H1 (cell line): ENCODE measurements at regions of chr4 and their contacts with region 1.

Region 1: DNA sequence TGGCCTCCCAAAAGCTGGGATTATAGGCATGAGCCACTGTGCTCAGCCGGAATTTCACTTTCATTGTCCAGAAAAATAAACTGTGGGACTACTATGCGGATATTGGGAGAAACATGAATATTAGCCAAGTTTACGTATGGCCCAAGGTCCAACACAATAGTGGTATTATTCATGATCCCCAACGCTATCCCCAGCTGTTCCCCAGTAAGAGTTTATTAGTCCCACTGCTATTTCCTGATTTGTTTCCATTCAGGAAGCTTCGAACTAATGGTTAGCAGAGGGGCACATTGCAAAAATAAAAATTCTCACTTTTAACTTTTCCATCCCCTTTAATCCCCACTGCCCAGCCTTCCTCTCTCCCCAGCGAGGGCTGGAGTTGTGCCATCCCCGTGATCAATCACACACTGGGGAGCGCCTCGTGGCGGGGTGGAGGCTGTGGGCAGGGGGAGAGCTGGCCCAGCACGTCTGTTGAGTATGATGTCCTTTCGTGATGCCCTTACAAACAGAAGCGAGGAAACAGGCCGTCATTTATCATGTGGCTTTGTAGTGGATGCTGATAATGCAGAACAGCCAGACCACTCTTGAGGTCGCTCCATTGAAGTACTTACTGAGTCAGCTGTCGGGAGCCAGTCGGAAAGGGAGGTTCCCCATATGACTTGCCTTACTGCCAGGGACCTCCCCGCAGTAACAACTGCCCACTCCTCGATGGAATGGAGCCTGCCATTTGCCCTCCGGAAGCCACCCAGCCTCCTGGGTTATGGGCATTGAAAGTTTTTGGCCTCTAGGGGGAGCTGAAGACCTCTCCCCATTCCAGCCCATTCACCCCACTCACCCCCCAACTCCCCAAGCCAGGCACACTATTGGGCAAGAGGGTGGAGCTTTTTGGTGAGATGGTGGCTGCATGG is 117.0 kb downstream of the KDR start:
- DNase-seq: peak in 1 of 2 experiments; percentile 69
- H3K4me3 ChIP-seq: no peak overlapping the region
- H3K27ac ChIP-seq: no peak overlapping the region
- H3K4me1 ChIP-seq: no peaks in the 10 kb centered on the region; a peak in 1 of 7 replicates
- H3K27me3 ChIP-seq: no peaks in the 10 kb centered on the region
- CTCF ChIP-seq: peak; percentile 54 to 73 (median 65)
- EP300 ChIP-seq: no peak
- POLR2A ChIP-seq: no peak
- RAD21 ChIP-seq: peak; percentile 76 to 81

Region 2: GRCh38 chr4:54986095-54986846 is 22.1 kb before region 1 on chr4:
- CTCF ChIA-PET with region 1: interaction called, 13 read pairs
- POLR2A ChIA-PET with region 1: no interaction called
- DNase-seq: peak in 1 of 2 experiments; percentile 56
- H3K4me3 ChIP-seq: peak overlapping the region in 1 of 4 experiments; percentile 2; a peak in 1 of 8 replicates
- H3K27ac ChIP-seq: peak overlapping the region; percentile 79
- H3K4me1 ChIP-seq: peaks cover 7 to 11% (median 9%) of the 10 kb centered on the region in 4 experiments
- H3K27me3 ChIP-seq: no peaks in the 10 kb centered on the region
- CTCF ChIP-seq: no peak
- EP300 ChIP-seq: no peak
- POLR2A ChIP-seq: peak; percentile 31 to 60; a peak in 2 of 3 replicates
- RAD21 ChIP-seq: no peak; a peak in 1 of 4 replicates

Region 3: DNA sequence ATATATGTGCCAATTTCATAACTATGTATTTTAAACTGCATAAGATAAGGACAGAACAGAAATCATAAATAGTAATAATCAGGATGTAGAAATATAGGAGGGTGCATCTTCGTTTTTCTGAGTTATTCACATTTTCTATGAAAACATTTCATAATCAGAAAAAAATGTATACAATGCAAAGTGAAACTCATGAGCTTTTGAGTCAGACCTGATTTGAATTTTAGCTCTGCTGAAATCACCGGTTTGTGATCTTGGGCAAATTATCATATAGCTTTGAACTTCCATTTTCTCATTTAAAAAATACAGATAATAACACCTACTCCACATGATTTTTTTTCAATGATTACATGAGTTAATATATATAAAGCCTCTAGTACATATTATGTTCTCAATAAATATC is 10.1 kb after region 1 on chr4:
- CTCF ChIA-PET with region 1: interaction called, 12 read pairs
- POLR2A ChIA-PET with region 1: no interaction called
- DNase-seq: no peak
- H3K4me3 ChIP-seq: no peak overlapping the region
- H3K27ac ChIP-seq: no peak overlapping the region
- H3K4me1 ChIP-seq: no peaks in the 10 kb centered on the region; a peak in 2 of 7 replicates
- H3K27me3 ChIP-seq: no peaks in the 10 kb centered on the region
- CTCF ChIP-seq: no peak
- EP300 ChIP-seq: no peak
- POLR2A ChIP-seq: no peak
- RAD21 ChIP-seq: no peak

Region 4: DNA sequence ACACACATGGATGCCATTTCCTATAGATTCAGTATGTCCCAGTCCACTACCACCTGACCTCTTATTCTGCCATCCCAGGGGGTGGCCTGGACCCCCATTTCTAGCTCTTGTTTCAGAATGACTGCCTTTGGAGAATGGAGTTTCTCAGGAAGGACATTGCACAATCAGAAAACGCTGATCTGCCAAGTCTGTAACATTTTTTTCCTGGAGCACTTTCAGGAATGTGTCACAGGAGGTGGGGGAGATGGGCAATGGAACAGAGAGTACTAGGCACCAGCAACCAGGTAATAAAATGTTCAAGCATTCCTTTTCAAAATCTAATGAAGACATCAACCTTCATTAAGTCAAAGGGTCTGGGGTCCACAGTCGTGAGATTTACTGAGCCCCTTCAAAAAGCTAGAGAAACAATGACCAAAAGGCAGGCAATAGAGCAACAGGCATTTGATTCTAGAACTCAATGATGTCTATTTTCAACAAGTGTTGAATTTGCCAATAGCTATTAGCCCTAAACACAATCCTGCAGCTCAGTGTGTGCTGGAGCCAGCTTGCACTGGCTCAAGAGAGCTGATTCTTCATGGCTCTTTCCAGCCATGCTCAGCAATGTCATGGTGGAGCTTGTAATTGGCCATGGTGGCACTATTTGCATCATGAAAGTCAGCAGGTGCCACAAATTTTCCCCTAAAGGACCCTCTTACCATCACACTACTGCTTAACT is 29.9 kb after region 1 on chr4:
- CTCF ChIA-PET with region 1: no interaction called
- POLR2A ChIA-PET with region 1: no interaction called
- DNase-seq: no peak
- H3K4me3 ChIP-seq: no peak overlapping the region
- H3K27ac ChIP-seq: no peak overlapping the region
- H3K4me1 ChIP-seq: no peaks in the 10 kb centered on the region
- H3K27me3 ChIP-seq: no peaks in the 10 kb centered on the region; a peak in 1 of 7 replicates
- CTCF ChIP-seq: no peak
- EP300 ChIP-seq: no peak
- POLR2A ChIP-seq: no peak
- RAD21 ChIP-seq: no peak

Region 5: GRCh38 chr4:55074386-55074785 is 66.0 kb after region 1 on chr4:
- CTCF ChIA-PET with region 1: interaction called, 11 read pairs
- POLR2A ChIA-PET with region 1: no interaction called
- DNase-seq: no peak
- H3K4me3 ChIP-seq: no peak overlapping the region
- H3K27ac ChIP-seq: no peak overlapping the region
- H3K4me1 ChIP-seq: peaks cover 0 to 2% (median 0%) of the 10 kb centered on the region in 4 experiments; a peak in 2 of 7 replicates
- H3K27me3 ChIP-seq: no peaks in the 10 kb centered on the region
- CTCF ChIP-seq: no peak
- EP300 ChIP-seq: no peak
- POLR2A ChIP-seq: no peak
- RAD21 ChIP-seq: no peak

Region 6: GRCh38 chr4:55116450-55116849 is 108.0 kb after region 1 on chr4:
- CTCF ChIA-PET with region 1: no interaction called
- POLR2A ChIA-PET with region 1: no interaction called
- DNase-seq: no peak
- H3K4me3 ChIP-seq: no peak overlapping the region
- H3K27ac ChIP-seq: no peak overlapping the region
- H3K4me1 ChIP-seq: peaks cover 0 to 6% (median 3%) of the 10 kb centered on the region in 4 experiments; a peak in 3 of 7 replicates
- H3K27me3 ChIP-seq: no peaks in the 10 kb centered on the region
- CTCF ChIP-seq: no peak
- EP300 ChIP-seq: no peak
- POLR2A ChIP-seq: no peak
- RAD21 ChIP-seq: no peak

Region 7: DNA sequence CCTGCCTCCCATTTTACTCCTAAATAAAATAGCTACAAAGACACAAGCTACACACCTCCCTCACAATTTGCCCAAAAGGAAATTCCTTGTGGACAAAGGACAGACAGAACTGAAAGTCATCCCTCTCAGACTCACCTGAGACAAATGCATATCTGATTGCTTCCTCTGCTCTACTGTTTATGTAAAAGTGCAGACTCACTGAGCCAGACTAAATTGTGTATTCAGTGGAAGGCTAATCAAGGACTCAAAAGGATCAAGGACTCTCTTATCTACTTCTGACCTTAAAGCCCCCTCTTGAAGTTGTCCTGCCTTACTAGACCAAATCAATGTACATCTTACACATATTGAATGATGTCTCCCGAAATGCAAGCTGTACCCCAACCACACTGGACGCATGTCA is 579.7 kb after region 1 on chr4:
- CTCF ChIA-PET with region 1: no interaction called
- POLR2A ChIA-PET with region 1: no interaction called
- DNase-seq: no peak
- H3K4me3 ChIP-seq: no peak overlapping the region
- H3K27ac ChIP-seq: no peak overlapping the region
- H3K4me1 ChIP-seq: no peaks in the 10 kb centered on the region
- H3K27me3 ChIP-seq: no peaks in the 10 kb centered on the region
- CTCF ChIP-seq: no peak
- EP300 ChIP-seq: no peak
- POLR2A ChIP-seq: no peak
- RAD21 ChIP-seq: no peak